ENCODE measurements at regions of chr16 and their contacts with region 1.

Region 1: GRCh38 chr16:13118091-13118490 is 216.7 kb downstream of the SHISA9 start:
- DNase-seq: no peak
- H3K4me3 ChIP-seq: no peak overlapping the region
- H3K27ac ChIP-seq: no peak overlapping the region
- H3K4me1 ChIP-seq: peaks cover 32% of the 10 kb centered on the region
- H3K27me3 ChIP-seq: no peaks in the 10 kb centered on the region
- CTCF ChIP-seq: no peak

Region 2: DNA sequence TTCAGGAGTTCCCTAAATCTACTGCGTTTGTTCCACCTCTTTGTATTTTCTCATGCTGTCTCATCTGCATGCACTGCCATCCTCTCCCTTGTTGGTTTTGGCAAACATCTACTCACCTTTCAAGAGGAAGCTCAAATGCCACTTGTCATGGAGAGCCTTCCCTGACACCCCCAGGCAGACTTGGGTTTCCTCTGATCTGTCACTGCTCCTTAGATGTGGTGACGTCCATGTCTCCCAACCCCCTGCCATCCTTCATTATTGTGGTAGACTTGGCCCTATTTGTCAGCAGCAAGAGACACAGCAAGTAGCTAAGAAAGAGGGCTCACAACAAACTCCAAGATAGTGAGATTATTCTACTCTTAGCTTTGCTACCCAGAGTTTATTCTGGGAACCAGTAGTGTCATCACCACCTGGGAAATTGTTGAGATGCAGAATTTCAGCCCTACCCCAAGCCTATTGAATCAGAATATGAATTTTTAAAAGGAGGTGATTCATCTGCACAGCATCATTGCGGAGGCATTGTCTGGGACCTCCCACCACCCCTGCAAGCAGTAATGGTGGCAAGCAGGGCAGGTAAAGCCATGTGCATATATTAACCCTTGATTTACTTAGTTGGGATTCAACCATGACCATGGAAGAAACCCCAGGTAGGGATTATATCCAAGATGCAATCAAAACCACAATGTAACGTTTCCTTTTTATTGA is 32.2 kb after region 1 on chr16:
- CTCF ChIA-PET with region 1: no interaction called
- dilution Hi-C with region 1: no loop called
- in situ Hi-C with region 1: no loop called
- intact Hi-C with region 1: loop called (anchors 5 kb)
- DNase-seq: no peak
- H3K4me3 ChIP-seq: no peak overlapping the region
- H3K27ac ChIP-seq: no peak overlapping the region
- H3K4me1 ChIP-seq: peaks cover 22% of the 10 kb centered on the region
- H3K27me3 ChIP-seq: no peaks in the 10 kb centered on the region
- CTCF ChIP-seq: no peak